ENCODE measurements at regions of chr2 and their contacts with region 1.

Region 1: GRCh38 chr2:69914170-69914960 is 544 bp upstream of the MXD1 start:
- DNase-seq: peak; percentile 100
- H3K4me3 Mint-ChIP-seq: peak overlapping the region; percentile 78
- H3K27ac Mint-ChIP-seq: peak overlapping the region; percentile 46
- H3K4me1 Mint-ChIP-seq: peaks cover 24% of the 10 kb centered on the region
- H3K27me3 Mint-ChIP-seq: no peaks in the 10 kb centered on the region
- CTCF ChIP-seq: no peak

Region 2: DNA sequence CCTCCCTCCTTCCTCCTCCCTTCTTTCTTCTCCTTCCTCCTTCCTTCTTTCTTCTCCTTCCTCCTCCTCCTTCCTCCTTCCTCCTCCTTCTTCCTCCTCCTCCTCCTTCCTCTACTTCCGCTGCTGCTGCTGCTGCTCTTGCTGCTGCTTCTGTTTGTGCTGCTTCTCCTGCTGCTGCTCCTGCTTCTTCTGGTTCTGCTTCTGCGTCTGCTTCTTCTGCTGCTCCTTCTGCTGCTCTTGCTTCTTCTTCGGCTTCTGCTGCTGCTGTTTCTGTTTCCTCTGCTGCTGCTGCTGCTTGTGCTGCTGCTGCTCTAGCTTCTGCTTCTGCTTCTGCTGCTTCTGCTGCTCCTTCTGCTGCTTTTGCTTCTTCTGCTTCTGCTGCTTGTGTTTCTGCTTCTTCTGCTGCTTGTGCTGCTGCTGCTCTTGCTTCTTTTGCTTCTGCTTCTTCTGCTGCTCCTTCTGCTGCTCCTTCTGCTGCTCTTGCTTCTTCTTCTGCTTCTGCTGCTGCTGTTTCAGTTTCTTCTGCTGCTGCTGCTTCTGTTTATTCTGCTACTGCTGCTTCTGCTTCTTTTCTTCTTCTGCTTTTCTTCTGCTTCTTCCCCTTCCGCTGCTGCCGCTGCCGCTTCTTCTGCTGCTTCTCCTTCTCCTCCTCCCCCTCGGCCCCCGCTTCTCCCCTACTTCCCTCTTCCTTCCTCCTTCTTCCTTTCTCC is 12.0 kb before region 1 on chr2:
- CTCF ChIA-PET with region 1: interaction called, 3 read pairs
- POLR2A ChIA-PET with region 1: interaction called, 10 read pairs
- intact Hi-C with region 1: no loop called
- DNase-seq: no peak
- H3K4me3 Mint-ChIP-seq: no peak overlapping the region
- H3K27ac Mint-ChIP-seq: no peak overlapping the region
- H3K4me1 Mint-ChIP-seq: peaks cover 15% of the 10 kb centered on the region
- H3K27me3 Mint-ChIP-seq: no peaks in the 10 kb centered on the region
- CTCF ChIP-seq: no peak

Region 3: GRCh38 chr2:69997015-69997830 is 82.9 kb after region 1 on chr2:
- CTCF ChIA-PET with region 1: no interaction called
- POLR2A ChIA-PET with region 1: interaction called, 10 read pairs
- intact Hi-C with region 1: no loop called
- DNase-seq: peak; percentile 84
- H3K4me3 Mint-ChIP-seq: peak overlapping the region; percentile 41
- H3K27ac Mint-ChIP-seq: peak overlapping the region; percentile 6
- H3K4me1 Mint-ChIP-seq: peaks cover 18% of the 10 kb centered on the region
- H3K27me3 Mint-ChIP-seq: no peaks in the 10 kb centered on the region
- CTCF ChIP-seq: no peak

Region 4: GRCh38 chr2:70086838-70087701 is 172.7 kb after region 1 on chr2 and contains the start of gene PCBP1:
- CTCF ChIA-PET with region 1: interaction called, 8 read pairs
- POLR2A ChIA-PET with region 1: interaction called, 319 read pairs
- intact Hi-C with region 1: loop called (anchors 1 kb)
- DNase-seq: peak; percentile 91
- H3K4me3 Mint-ChIP-seq: peak within 1 kb of the TSS; percentile 94
- H3K27ac Mint-ChIP-seq: peak within 1 kb of the TSS; percentile 100
- H3K4me1 Mint-ChIP-seq: peaks cover 38% of the 10 kb centered on the region
- H3K27me3 Mint-ChIP-seq: no peaks in the 10 kb centered on the region
- CTCF ChIP-seq: no peak
- total RNA-seq, gene PCBP1: 259 and 277 TPM in 2 replicates

Region 5: GRCh38 chr2:70190418-70191243 is 276.3 kb after region 1 on chr2 and contains the start of gene C2orf42:
- CTCF ChIA-PET with region 1: no interaction called
- POLR2A ChIA-PET with region 1: interaction called, 51 read pairs
- intact Hi-C with region 1: no loop called
- DNase-seq: peak; percentile 97
- H3K4me3 Mint-ChIP-seq: peak within 1 kb of the TSS; percentile 80
- H3K27ac Mint-ChIP-seq: peak within 1 kb of the TSS; percentile 97
- H3K4me1 Mint-ChIP-seq: peaks cover 5% of the 10 kb centered on the region
- H3K27me3 Mint-ChIP-seq: no peaks in the 10 kb centered on the region
- CTCF ChIP-seq: no peak
- total RNA-seq, gene C2orf42: 17.6 and 28.5 TPM in 2 replicates

Region 6: DNA sequence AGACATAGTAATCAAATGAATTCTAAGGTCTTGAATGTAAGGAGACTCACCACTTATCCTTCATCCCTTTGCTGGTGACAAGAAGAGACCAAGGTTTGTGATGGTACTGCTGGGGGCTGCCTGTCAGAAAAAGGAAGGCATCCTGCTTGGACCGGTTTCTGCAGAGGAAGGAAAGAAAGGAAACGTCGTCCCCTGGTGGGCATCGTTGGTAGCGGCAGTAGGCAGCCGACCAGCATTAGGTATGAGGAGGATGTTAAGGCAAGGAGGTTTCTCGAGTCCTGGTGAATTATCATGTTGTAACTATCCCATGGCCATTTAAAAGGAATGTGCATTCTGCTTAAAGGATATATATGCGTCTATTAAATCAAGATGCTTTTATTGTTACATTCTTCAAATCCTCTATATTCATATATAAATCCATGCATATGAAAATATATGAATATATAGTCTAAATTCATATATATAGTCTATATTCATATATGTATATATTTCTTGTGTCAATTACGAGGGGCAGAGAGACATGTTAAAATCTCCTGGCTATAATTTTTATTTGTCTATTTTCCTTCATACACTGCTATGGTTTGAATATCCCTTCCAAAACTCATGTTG is 733.6 kb after region 1 on chr2:
- CTCF ChIA-PET with region 1: no interaction called
- POLR2A ChIA-PET with region 1: no interaction called
- intact Hi-C with region 1: loop called (anchors 10 kb)
- DNase-seq: peak; percentile 67
- H3K4me3 Mint-ChIP-seq: no peak overlapping the region
- H3K27ac Mint-ChIP-seq: no peak overlapping the region
- H3K4me1 Mint-ChIP-seq: no peaks in the 10 kb centered on the region
- H3K27me3 Mint-ChIP-seq: peaks cover 23% of the 10 kb centered on the region
- CTCF ChIP-seq: peak; percentile 96

Measured in MCF 10A (cell line).